Left ventricle myocardium inferior (tissue), 1 donor: ENCODE measurements at regions of chr5 and their contacts with region 1.

Region 1: DNA sequence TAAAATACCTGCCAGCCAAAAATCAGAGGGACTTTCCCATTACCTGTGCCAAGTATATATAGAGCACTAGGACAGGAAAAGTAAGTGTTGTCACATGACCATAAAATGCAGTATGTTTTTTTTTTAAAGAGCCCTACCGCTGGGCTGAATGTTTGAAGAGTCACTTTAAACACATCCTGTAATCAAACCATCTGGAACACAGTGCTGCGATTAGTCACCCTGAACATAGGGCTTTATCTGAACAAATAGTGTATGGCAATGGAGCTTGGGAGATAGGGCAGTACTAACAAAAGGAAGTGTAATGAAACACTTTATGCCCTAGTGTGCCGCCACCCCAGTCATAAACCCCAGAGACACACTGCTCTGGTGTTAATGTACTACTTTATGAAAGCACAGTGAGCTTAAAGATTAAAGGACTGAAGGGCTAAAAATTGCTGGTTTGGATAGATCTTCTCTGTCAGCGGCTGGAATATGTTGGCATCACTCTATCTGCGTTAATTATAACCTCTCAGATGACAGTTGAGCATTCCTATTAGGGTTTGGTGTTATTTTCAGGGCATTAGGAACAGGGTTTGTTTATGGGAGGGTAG is 90.4 kb downstream of the ZNF608 start:
- DNase-seq: no peak
- H3K4me3 ChIP-seq: peak overlapping the region; percentile 40
- H3K27ac ChIP-seq: peak overlapping the region; percentile 65
- H3K4me1 ChIP-seq: peaks cover 77% of the 10 kb centered on the region
- H3K27me3 ChIP-seq: no peaks in the 10 kb centered on the region
- CTCF ChIP-seq: no peak

Region 2: GRCh38 chr5:124704594-124705284 is 48.7 kb after region 1 on chr5:
- intact Hi-C with region 1: loop called (anchors 5 kb)
- DNase-seq: no peak
- H3K4me3 ChIP-seq: no peak overlapping the region
- H3K27ac ChIP-seq: no peak overlapping the region
- H3K4me1 ChIP-seq: peaks cover 76% of the 10 kb centered on the region
- H3K27me3 ChIP-seq: no peaks in the 10 kb centered on the region
- CTCF ChIP-seq: no peak

Region 3: DNA sequence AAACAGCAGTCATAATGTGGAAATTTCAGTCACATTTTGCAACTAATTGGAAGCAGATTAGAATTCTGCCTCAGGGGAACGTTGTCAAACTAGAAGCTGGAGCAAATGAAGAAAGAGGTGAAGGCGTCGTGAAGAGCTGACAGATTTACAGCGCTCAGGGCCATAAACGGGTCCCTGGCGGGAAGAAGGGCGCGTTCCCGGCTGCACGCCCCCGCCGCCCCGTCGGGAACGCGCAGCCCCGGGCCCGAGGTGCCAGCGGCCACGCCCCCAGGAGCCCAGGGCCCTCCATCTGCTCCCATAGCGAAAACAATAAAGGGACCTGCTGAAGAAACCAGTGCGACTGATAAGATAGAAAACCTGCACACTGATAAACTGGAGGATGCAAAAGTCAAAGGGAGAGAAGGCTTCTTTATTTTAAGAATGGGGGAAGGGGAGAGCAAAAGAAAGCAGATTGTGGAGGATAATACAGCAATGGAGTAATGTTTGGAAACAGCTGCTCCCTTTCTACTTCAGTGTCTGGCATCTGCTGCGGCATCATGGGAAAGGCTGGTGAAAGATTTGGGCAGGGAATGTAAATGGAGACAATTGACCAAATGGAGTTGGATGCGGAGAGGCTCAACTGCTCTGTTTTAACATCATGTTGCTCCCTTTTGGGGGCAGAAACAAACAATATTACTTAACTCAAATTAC is 79.3 kb after region 1 on chr5:
- intact Hi-C with region 1: no loop called
- DNase-seq: no peak
- H3K4me3 ChIP-seq: peak overlapping the region; percentile 56
- H3K27ac ChIP-seq: peak overlapping the region; percentile 55
- H3K4me1 ChIP-seq: peaks cover 69% of the 10 kb centered on the region
- H3K27me3 ChIP-seq: no peaks in the 10 kb centered on the region
- CTCF ChIP-seq: no peak